GM13976 (cell line): ENCODE measurements at regions of chr1 and their contacts with region 1.

Region 1: DNA sequence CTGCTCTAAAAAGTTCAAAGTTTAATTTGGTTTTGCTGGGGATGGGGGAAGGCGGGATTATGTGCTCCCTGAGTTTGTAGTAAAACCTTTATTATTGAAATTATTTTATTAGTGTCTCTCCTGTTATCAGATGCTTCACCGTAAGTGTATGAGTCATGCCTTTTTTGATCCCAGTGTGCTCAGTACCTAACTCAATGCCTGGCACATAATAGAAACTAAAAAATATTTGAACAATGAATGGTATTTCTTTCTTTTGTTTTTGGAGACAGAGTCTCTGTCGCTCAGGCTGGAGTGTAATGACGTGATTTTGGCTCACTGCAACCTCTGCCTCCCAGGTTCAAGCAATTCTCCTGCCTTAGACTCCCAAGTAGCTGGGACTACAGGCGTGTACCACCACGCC is 6.4 kb downstream of the SNRPE start:
- DNase-seq: no peak
- CTCF ChIP-seq: no peak

Region 2: GRCh38 chr1:204128964-204129896 is 261.4 kb after region 1 on chr1:
- in situ Hi-C with region 1: loop called (anchors 5 kb)
- DNase-seq: peak; percentile 93
- CTCF ChIP-seq: peak; percentile 91